CD4-positive, alpha-beta memory T cell (primary cell): ENCODE measurements at regions of chr17 and their contacts with region 1.

Region 1: DNA sequence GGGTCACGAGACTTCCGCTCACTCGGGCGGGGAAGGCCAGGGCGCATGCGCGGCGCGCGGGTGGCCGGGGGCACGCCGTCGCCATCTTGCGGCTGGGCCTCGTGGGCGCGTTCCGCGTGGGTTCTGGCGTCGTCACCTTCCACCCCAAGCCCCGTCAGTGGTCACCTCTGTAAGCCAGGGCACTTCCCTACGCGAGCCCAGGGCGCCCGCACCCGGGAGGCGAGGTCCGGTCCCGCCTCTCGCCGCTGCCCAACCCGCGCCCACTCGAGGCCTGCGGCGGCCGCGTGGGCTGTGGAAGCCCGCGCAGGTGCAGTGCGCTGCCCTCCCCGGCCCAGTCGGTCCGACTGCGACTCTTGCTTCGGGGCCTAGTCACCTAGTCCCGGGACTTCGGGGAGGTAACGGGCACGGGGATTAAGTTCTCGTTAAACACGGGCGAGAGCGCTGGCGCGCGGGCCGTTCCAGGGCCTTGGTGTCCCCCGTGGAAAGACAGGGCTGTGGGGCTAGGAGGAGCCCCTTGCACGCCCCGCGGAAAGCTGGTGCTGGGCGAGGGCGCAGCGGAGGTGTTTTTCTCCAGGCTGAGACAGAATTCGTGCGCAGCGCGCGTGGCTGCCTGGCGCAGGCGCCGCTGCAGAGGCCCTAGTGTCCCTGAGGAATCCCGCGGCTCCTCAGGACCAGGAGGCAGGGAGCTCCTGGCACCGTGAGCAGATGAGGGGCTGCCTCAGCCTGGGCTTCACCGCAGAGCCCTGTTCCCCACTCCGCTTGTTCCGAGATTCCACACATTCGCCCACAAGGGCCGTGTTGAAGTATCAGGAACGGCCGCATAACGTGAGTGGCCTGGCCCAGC is 472 bp upstream of the ARHGDIA start:
- DNase-seq: peak; percentile 95 to 97 (median 96)
- H3K4me3 ChIP-seq: peak overlapping the region; percentile 84 to 95
- H3K4me3 Mint-ChIP-seq: peak overlapping the region; percentile 81 to 91 (median 86)
- H3K27ac ChIP-seq: peak overlapping the region; percentile 95
- H3K27ac Mint-ChIP-seq: peak overlapping the region; percentile 93 to 97 (median 96)
- H3K4me1 ChIP-seq: peaks cover 50% of the 10 kb centered on the region
- H3K4me1 Mint-ChIP-seq: peaks cover 9 to 53% (median 30%) of the 10 kb centered on the region in 4 donors
- H3K27me3 ChIP-seq: no peaks in the 10 kb centered on the region
- H3K27me3 Mint-ChIP-seq: no peaks in the 10 kb centered on the region

Region 2: DNA sequence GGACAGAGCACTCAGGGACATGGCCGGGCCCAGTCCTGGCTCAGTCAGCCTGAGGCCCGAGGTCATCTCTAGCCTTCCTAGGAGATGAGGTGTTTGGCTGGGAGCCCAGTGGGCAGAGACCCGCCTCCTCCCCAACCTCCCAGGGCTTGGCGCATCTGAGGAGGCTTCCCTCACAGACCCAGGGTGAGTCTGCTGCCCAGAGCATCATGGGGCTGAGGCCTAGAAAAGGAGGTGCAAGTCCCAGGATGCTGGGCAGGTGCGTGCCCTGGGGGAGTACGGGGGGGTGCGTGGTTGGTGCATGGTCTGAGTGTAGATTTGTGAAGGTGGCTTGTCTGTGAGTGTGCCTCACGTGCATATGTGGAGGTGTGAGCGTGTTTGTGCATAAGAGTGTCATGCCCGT is 219.9 kb before region 1 on chr17:
- CTCF ChIA-PET with region 1: no interaction called
- POLR2A ChIA-PET with region 1: no interaction called
- intact Hi-C with region 1: no loop called
- DNase-seq: no peak
- H3K4me3 ChIP-seq: no peak overlapping the region
- H3K4me3 Mint-ChIP-seq: no peak overlapping the region
- H3K27ac ChIP-seq: no peak overlapping the region
- H3K27ac Mint-ChIP-seq: peak overlapping the region in 3 of 7 donors; percentile 29 to 79 (median 64)
- H3K4me1 ChIP-seq: peaks cover 13% of the 10 kb centered on the region
- H3K4me1 Mint-ChIP-seq: peaks cover 3 to 15% (median 5%) of the 10 kb centered on the region in 4 donors
- H3K27me3 ChIP-seq: no peaks in the 10 kb centered on the region
- H3K27me3 Mint-ChIP-seq: peaks cover 13 to 19% of the 10 kb centered on the region in 2 donors

Region 3: DNA sequence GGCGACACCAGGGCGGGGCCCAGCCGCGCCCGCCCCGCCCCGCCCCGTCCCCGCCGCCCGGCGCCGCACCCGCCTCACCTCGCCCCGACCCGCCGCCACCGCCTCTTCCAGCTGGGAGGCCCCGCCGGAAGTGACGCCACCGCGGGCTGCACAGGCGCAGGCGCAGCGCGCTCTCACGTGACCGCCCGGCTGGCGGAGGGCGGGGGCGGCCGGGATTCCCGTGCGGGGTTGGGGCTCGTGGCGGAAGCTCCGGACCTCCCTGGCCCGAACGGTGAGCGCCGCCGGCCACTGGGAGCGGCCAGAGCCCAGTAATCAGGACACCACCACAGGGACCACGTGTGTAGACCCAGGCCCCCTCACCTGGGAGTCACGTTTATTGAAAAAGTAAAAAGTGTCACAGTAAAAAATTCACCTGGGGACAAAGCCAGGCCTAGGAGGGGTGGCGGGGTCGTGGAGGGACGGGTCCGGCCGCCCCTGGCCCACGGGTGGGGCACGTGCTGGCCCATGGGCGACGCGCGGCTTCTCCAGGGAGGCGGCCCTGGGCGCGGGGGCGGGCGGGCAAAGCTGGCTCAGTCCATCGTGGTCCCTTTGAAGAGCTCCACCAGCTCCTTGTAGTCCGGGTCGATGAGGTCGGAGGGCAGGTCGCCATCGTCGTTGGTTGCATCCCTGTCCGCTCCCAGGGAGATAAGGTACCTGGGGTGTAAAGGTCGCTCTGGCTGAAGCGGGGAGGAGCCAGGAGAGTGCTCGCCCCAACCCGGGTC is 38.3 kb before region 1 on chr17 and contains the start of gene MCRIP1:
- CTCF ChIA-PET with region 1: interaction called, 5 read pairs
- POLR2A ChIA-PET with region 1: interaction called, 18 read pairs
- intact Hi-C with region 1: loop called (anchors 5 kb)
- DNase-seq: peak; percentile 91 to 93 (median 92)
- H3K4me3 ChIP-seq: peak within 1 kb of the TSS; percentile 56 to 79
- H3K4me3 Mint-ChIP-seq: peak within 1 kb of the TSS; percentile 89 to 97 (median 94)
- H3K27ac ChIP-seq: peak within 1 kb of the TSS; percentile 90
- H3K27ac Mint-ChIP-seq: peak within 1 kb of the TSS; percentile 96 to 98 (median 97)
- H3K4me1 ChIP-seq: peaks cover 23% of the 10 kb centered on the region
- H3K4me1 Mint-ChIP-seq: peaks cover 10 to 31% (median 21%) of the 10 kb centered on the region in 4 donors
- H3K27me3 ChIP-seq: no peaks in the 10 kb centered on the region
- H3K27me3 Mint-ChIP-seq: no peaks in the 10 kb centered on the region
- total RNA-seq, gene MCRIP1: 65.8 to 71.0 TPM

Region 4: GRCh38 chr17:81890447-81891299 is 19.1 kb after region 1 on chr17:
- CTCF ChIA-PET with region 1: interaction called, 3 read pairs
- POLR2A ChIA-PET with region 1: interaction called, 29 read pairs
- intact Hi-C with region 1: loop called (anchors 1 kb)
- DNase-seq: no peak
- H3K4me3 ChIP-seq: peak overlapping the region; percentile 42 to 60
- H3K4me3 Mint-ChIP-seq: peak overlapping the region; percentile 85 to 92 (median 89)
- H3K27ac ChIP-seq: peak overlapping the region; percentile 64
- H3K27ac Mint-ChIP-seq: peak overlapping the region; percentile 89 to 97 (median 96)
- H3K4me1 ChIP-seq: peaks cover 20% of the 10 kb centered on the region
- H3K4me1 Mint-ChIP-seq: peaks cover 8 to 33% (median 17%) of the 10 kb centered on the region in 4 donors
- H3K27me3 ChIP-seq: no peaks in the 10 kb centered on the region
- H3K27me3 Mint-ChIP-seq: no peaks in the 10 kb centered on the region

Region 5: GRCh38 chr17:81911277-81911961 is 39.8 kb after region 1 on chr17 and contains the start of gene PCYT2:
- CTCF ChIA-PET with region 1: no interaction called
- POLR2A ChIA-PET with region 1: interaction called, 23 read pairs
- intact Hi-C with region 1: loop called (anchors 2 kb)
- DNase-seq: peak; percentile 90 to 94 (median 93)
- H3K4me3 ChIP-seq: peak within 1 kb of the TSS; percentile 8 to 70
- H3K4me3 Mint-ChIP-seq: peak within 1 kb of the TSS; percentile 81 to 90 (median 86)
- H3K27ac ChIP-seq: peak within 1 kb of the TSS; percentile 55
- H3K27ac Mint-ChIP-seq: peak within 1 kb of the TSS in 6 of 7 donors; percentile 8 to 85 (median 82)
- H3K4me1 ChIP-seq: peaks cover 26% of the 10 kb centered on the region
- H3K4me1 Mint-ChIP-seq: peaks cover 5 to 34% (median 10%) of the 10 kb centered on the region in 4 donors
- H3K27me3 ChIP-seq: no peaks in the 10 kb centered on the region
- H3K27me3 Mint-ChIP-seq: no peaks in the 10 kb centered on the region
- total RNA-seq, gene PCYT2: 43.5 to 48.3 TPM

Region 6: GRCh38 chr17:81917565-81918332 is 46.1 kb after region 1 on chr17 and contains the start of gene SIRT7:
- CTCF ChIA-PET with region 1: no interaction called
- POLR2A ChIA-PET with region 1: interaction called, 23 read pairs
- intact Hi-C with region 1: no loop called
- DNase-seq: peak; percentile 79 to 81 (median 80)
- H3K4me3 ChIP-seq: peak within 1 kb of the TSS; percentile 30 to 66
- H3K4me3 Mint-ChIP-seq: peak within 1 kb of the TSS; percentile 86 to 95 (median 92)
- H3K27ac ChIP-seq: peak within 1 kb of the TSS; percentile 64
- H3K27ac Mint-ChIP-seq: peak within 1 kb of the TSS; percentile 80 to 94 (median 90)
- H3K4me1 ChIP-seq: peaks cover 27% of the 10 kb centered on the region
- H3K4me1 Mint-ChIP-seq: peaks cover 13 to 42% (median 26%) of the 10 kb centered on the region in 4 donors
- H3K27me3 ChIP-seq: no peaks in the 10 kb centered on the region
- H3K27me3 Mint-ChIP-seq: no peaks in the 10 kb centered on the region
- total RNA-seq, gene SIRT7: 87.8 to 91.9 TPM